Heart left ventricle (tissue), 16 donors: ENCODE measurements at regions of chr18 and their contacts with region 1.

Region 1: GRCh38 chr18:31722369-31722957 is 38.1 kb upstream of the B4GALT6 start:
- DNase-seq: peak in 4 of 5 donors; percentile 51 to 75 (median 72)
- ATAC-seq: peak; percentile 63 to 90 (median 86)
- H3K4me3 ChIP-seq: no peak overlapping the region
- H3K27ac ChIP-seq: no peak overlapping the region
- H3K4me1 ChIP-seq: peaks cover 0 to 26% (median 3%) of the 10 kb centered on the region in 12 donors
- H3K27me3 ChIP-seq: peaks cover 0 to 9% (median 0%) of the 10 kb centered on the region in 9 donors
- CTCF ChIP-seq: peak; percentile 78 to 94 (median 86)
- POLR2A ChIP-seq: no peak

Region 2: DNA sequence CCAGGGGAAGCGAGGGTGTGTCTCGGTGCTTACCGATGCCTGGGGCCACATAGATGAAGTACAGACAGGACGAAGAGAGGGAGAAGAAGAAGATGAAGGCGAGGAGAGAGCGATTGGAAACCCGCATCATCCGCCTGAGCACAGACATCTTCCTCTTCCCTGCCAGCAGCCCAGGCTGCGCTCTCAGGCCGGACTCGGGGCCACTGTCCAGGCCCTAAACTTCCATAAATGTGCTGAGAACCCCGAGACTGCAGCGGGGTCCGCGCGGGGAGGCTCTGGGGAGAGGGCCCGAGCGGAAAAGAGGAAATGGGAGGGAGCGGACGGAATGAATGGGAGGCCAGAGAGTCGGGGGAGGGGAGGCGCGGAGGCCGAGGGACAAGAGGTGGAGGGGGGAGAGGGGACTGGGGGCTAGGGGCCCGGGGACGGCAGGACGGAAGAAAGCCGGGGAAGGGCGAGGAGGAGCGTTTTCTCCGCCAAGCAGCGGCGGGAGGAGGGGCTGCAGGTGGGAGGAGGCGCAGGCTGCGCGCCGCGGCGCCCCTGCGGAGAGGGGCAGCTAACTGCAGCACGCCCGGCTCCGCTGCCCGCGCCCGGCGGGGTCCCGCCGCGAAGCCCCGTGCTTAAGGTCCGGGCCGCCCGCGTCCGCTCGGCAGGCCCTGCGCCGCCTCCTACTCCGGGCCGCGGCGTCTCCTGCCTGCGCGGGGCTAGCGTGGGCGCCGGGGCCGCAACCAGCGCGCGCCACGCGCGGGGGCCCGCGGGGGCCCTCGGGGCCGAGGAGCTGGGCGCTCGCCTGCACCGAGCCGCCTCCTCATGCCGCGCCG is 38.0 kb before region 1 on chr18 and contains the start of gene B4GALT6:
- intact Hi-C with region 1: loop called in 1 of 10 experiments (anchors 5 kb)
- DNase-seq: peak in 4 of 5 donors; percentile 11 to 63 (median 32)
- ATAC-seq: peak in 3 of 4 donors; percentile 23 to 34 (median 32)
- H3K4me3 ChIP-seq: peak within 1 kb of the TSS; percentile 55 to 84 (median 64)
- H3K27ac ChIP-seq: peak within 1 kb of the TSS in 11 of 12 donors; percentile 34 to 84 (median 63)
- H3K4me1 ChIP-seq: peaks cover 0 to 16% (median 4%) of the 10 kb centered on the region in 12 donors
- H3K27me3 ChIP-seq: no peaks in the 10 kb centered on the region
- CTCF ChIP-seq: no peak
- POLR2A ChIP-seq: no peak
- total RNA-seq, gene B4GALT6: 3.3 to 11.9 (median 7.0) TPM